Activated T-helper 2 cell treated with anti-CD3 and anti-CD28 coated beads, Interferon-gamma antibody, Interleukin-2, Interleukin-4, amounts not matched to agents 10 μg/mL and 5 μg/mL and 100 μg/mL, durations not matched to agents 14 hours and 24 hours and 36 hours (primary cell): ENCODE measurements at regions of chr7 and their contacts with region 1.

Region 1: DNA sequence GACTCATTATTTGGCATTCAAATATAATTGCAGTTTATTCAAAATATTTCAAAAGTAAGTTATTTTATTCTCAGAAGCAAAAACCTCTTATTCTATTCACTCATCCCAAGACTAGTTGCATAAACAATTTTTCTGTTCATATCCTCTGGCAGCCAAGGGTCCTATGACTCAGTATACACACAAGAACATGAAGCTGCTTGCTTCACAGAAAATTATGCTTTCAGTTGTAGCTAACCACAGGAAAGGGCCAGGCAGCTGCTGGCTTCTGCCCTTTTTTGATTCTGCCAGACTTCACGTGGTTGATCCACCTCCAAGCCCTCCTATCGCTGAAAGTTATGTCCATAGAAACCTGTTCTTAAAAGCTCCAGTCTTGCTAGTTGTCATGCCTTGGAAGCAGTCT is 108.8 kb downstream of the ABCA13 start:
- DNase-seq: no peak
- H3K4me3 Mint-ChIP-seq: no peak overlapping the region
- H3K27ac Mint-ChIP-seq: no peak overlapping the region
- H3K4me1 Mint-ChIP-seq: peaks cover 50% of the 10 kb centered on the region
- H3K27me3 Mint-ChIP-seq: peaks cover 11% of the 10 kb centered on the region

Region 2: DNA sequence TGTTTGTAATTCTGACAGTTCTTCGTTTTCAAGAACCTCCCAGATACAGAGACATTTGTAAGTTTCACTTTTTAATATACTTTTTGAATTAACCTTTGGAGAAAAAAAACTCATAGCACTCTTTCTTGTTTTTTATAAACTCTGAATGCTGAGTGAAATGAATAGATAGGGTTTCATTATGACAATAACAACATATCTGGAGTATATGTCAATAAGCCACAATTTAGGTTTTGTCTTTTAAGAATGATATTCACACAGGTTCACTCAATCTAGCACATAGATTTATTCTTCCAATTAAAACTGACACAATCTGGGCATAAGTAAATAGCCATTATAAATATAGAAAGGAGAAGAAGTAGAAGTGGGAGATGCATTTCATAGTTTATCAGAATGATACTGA is 87.1 kb before region 1 on chr7:
- intact Hi-C with region 1: loop called (anchors 2 kb)
- DNase-seq: no peak
- H3K4me3 Mint-ChIP-seq: no peak overlapping the region
- H3K27ac Mint-ChIP-seq: no peak overlapping the region
- H3K4me1 Mint-ChIP-seq: no peaks in the 10 kb centered on the region
- H3K27me3 Mint-ChIP-seq: peaks cover 20% of the 10 kb centered on the region

Region 3: GRCh38 chr7:48251766-48252165 is 28.3 kb before region 1 on chr7:
- intact Hi-C with region 1: loop called (anchors 1 kb)
- DNase-seq: no peak
- H3K4me3 Mint-ChIP-seq: no peak overlapping the region
- H3K27ac Mint-ChIP-seq: peak overlapping the region; percentile 26
- H3K4me1 Mint-ChIP-seq: peaks cover 30% of the 10 kb centered on the region
- H3K27me3 Mint-ChIP-seq: peaks cover 3% of the 10 kb centered on the region

Region 4: DNA sequence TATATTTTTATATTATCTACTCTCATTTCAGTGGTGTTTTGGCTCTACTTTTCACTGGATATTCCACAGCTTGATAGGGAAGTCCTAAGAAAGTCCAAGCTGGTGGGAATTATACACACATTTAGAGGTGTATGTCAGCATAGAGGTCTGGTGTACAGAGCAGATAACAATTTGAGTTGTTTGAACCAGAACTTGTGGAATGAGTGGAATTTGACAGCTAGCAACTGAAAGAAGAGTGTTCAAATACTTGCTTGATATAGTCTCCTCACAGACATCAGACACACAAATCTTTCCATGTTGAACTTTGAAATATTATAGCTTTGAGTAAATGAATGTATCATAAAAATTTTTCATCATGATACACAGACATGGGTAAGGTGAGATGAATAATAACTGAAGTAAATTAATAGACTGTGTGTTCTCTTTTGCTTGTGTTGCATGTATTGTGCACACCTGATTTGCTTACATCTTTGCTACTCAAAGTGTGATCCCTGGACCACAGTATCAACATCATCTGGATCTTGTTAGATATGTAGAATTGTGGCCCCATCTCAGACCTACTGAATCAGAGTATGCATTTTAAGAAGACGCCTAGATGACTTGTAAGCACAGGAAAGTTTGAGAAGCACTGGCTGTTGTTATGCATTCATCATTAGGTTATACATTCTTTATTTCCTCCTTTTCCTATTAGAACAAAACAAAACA is 17.3 kb before region 1 on chr7:
- intact Hi-C with region 1: loop called (anchors 2 kb)
- DNase-seq: no peak
- H3K4me3 Mint-ChIP-seq: no peak overlapping the region
- H3K27ac Mint-ChIP-seq: no peak overlapping the region
- H3K4me1 Mint-ChIP-seq: peaks cover 8% of the 10 kb centered on the region
- H3K27me3 Mint-ChIP-seq: peaks cover 30% of the 10 kb centered on the region